ENCODE measurements at regions of chr20 and their contacts with region 1.

Region 1: DNA sequence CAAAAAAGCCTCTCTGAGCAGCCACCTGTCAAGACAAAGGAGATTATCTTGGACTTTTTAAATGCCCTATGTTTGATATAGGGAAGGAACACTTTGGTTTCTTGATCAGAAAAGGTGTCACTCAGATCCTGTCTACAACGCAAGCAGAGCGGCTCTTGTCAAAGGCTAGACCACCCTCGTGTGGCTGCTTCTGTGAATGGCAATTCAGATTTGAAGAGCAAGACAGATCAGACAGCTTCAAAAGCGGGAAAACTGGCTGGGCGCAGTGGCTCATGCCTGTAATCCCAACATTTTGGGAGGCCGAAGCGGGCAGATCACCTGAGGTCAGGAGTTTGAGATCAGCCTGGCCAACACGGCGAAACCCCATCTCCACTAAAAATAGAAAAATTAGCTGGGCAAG is 10.1 kb upstream of the NXT1 start:
- DNase-seq: peak; percentile 74
- ATAC-seq: peak; percentile 92
- H3K4me3 Mint-ChIP-seq: no peak overlapping the region
- H3K27ac Mint-ChIP-seq: no peak overlapping the region
- H3K4me1 Mint-ChIP-seq: peaks cover 13% of the 10 kb centered on the region
- H3K27me3 Mint-ChIP-seq: no peaks in the 10 kb centered on the region; the same call in 1 of the 2 replicates
- CTCF ChIP-seq: 0 out of 2 replicates have a peak, but pooled peaks have one; percentile 21

Region 2: DNA sequence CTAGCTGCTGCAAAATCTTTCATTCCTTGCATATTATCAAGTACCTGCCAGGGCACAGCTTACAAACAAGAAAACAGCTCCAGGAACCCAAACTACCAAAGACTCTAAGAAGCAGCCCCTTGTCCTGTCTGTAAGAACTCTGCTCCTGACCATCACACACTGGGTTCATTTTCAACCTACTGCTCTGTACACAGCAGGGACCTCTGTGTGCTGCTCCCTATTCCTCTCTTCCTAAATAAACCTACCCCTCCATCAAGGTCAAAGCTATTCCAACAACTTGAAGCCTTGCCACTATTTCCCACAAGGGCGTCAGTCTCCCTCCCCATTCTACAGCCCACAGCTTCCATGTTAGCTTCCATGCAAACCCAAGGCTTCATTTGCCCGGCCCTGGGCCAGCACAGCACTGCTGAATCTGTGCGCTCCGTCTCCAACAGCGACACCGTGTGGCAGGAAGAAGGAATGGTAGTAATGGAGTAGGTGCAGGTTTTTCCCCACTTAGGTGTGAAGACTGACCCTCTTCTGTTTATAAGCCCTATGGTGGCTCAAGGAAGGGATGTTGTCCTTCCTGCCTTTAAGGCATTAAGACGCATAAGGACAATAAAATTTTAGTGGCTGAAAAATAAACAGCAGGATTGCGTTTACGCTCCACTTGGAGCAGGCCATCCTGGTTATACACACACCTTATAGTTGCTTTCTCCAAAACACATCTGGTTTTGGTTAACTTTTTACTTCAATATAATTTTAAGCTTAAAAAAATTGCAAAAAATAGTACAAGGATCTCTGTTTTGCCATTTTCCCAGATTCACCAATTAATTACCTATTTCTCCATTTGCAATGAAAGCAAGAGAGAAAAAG is 105.1 kb before region 1 on chr20:
- CTCF ChIA-PET with region 1: interaction called, 13 read pairs
- POLR2A ChIA-PET with region 1: no interaction called
- DNase-seq: peak; percentile 78
- ATAC-seq: peak; percentile 100
- H3K4me3 Mint-ChIP-seq: no peak overlapping the region
- H3K27ac Mint-ChIP-seq: no peak overlapping the region
- H3K4me1 Mint-ChIP-seq: no peaks in the 10 kb centered on the region
- H3K27me3 Mint-ChIP-seq: peaks cover 24% of the 10 kb centered on the region
- CTCF ChIP-seq: peak; percentile 87